A549 (cell line): ENCODE measurements at regions of chr16 and their contacts with region 1.

Region 1: GRCh38 chr16:75110637-75111513 is 5.7 kb downstream of the LDHD start:
- DNase-seq: peak; percentile 87 to 90
- ATAC-seq: peak; percentile 76 to 89
- H3K4me3 ChIP-seq: peak overlapping the region; percentile 22; the same call in 2 of the 3 replicates
- H3K27ac ChIP-seq: peak overlapping the region; percentile 49 to 90
- H3K4me1 ChIP-seq: peaks cover 40% of the 10 kb centered on the region
- CTCF ChIP-seq: peak; percentile 84
- EP300 ChIP-seq: no peak
- POLR2A ChIP-seq: no peak
- RAD21 ChIP-seq: peak; percentile 94 to 95

Region 2: GRCh38 chr16:74998481-74999218 is 112.2 kb before region 1 on chr16 and contains the start of gene ZNRF1:
- CTCF ChIA-PET with region 1: interaction called, 252 read pairs
- POLR2A ChIA-PET with region 1: interaction called, 14 read pairs
- DNase-seq: peak; percentile 82 to 86
- ATAC-seq: peak; percentile 84 to 88
- H3K4me3 ChIP-seq: peak within 1 kb of the TSS; percentile 80
- H3K27ac ChIP-seq: peak within 1 kb of the TSS; percentile 92 to 98
- H3K4me1 ChIP-seq: peaks cover 21% of the 10 kb centered on the region
- CTCF ChIP-seq: peak; percentile 95
- EP300 ChIP-seq: no peak; a peak in 1 of 5 replicates
- POLR2A ChIP-seq: peak; percentile 87
- RAD21 ChIP-seq: peak; percentile 88 to 95
- polyA plus RNA-seq, gene ZNRF1: 21.4 and 22.6 TPM in 2 replicates

Region 3: GRCh38 chr16:75019007-75019406 is 91.9 kb before region 1 on chr16:
- CTCF ChIA-PET with region 1: interaction called, 51 read pairs
- POLR2A ChIA-PET with region 1: no interaction called
- DNase-seq: peak in 1 of 2 experiments; percentile 54
- ATAC-seq: peak; percentile 47 to 59; a peak in 3 of 6 replicates
- H3K4me3 ChIP-seq: no peak overlapping the region
- H3K27ac ChIP-seq: peak overlapping the region; percentile 67 to 80
- H3K4me1 ChIP-seq: peaks cover 32% of the 10 kb centered on the region
- CTCF ChIP-seq: no peak
- EP300 ChIP-seq: peak in 1 of 2 experiments; percentile 14; a peak in 1 of 5 replicates
- POLR2A ChIP-seq: no peak
- RAD21 ChIP-seq: no peak

Region 4: DNA sequence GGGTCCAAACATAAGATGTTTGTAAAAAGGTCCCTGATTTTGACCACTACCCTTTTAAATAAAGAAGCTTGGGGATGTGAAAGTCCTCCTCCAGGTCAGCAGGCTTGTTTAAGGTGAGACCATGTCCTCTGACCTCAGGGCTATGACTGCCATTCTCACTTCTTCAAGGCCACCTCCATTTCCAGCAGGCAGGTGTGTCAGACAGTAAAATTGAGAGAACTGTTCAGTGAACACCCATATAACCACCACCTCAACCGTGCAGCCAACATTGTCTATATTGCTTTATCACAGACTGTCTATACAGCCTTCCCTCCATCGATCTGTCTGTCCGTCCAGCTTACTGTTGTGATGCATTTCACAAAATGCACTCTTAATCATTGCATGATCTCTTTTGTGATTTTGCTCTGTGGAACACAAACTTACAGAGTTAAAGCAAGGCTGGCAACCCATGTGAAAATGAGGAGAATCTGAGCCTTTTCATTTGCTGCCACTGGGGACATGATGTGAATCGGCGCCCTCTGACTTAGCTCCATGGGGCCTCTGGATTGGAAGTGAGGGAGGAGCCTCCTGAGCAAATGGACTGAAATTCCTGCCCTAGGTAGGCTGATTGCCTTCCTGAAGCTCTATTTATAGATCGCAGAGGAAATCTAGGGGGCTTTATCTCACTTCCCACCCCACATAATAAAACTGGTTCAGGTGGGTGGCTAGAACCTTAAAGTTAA is 58.2 kb before region 1 on chr16:
- CTCF ChIA-PET with region 1: interaction called, 13 read pairs
- POLR2A ChIA-PET with region 1: no interaction called
- DNase-seq: peak in 1 of 2 experiments; percentile 16
- ATAC-seq: peak in 1 of 2 experiments; percentile 54; a peak in 4 of 6 replicates
- H3K4me3 ChIP-seq: no peak overlapping the region
- H3K27ac ChIP-seq: no peak overlapping the region; a peak in 1 of 6 replicates
- H3K4me1 ChIP-seq: peaks cover 28% of the 10 kb centered on the region
- CTCF ChIP-seq: no peak
- EP300 ChIP-seq: no peak
- POLR2A ChIP-seq: no peak
- RAD21 ChIP-seq: no peak

Region 5: DNA sequence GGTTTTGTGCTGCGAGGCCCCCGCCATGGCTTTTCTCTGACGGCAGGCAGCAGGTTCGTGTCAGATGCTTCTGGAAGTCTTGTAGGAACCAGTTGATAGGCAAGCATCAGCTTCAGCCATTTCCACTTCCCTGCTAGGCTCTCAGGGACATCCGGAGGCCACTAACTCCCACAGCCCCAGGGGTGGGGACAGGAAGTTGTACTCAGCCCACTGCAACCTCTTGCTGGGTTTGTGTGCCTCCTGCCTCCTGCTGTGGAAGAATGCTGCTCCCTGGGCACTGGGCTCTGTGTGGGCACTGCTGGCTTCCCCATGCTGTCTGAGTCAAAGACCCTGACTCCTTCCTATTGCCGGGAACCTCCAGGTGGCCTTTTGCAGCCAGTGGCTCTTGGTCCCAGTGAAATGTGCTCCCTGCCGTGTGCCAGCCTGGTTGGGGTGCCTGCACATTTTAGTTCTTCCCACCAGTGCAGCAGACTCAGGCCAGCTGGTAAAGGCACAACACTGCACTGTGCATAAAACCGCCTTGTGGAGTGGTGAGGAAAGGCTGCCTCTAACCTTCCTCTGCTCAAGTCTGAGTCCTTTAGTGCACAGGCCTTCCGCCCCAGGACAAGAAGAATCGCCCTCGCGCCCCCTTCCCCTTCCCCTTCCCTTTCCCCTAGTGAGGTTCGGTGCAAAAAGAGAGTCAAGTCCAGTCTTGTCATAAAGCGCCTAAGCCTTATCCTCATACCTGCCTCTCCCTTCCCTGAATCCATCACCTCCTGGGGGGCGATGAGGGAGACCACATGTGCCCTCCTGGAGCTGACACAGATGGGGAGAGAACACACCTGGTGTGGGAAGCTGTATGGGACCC is 10.9 kb before region 1 on chr16:
- CTCF ChIA-PET with region 1: interaction called, 69 read pairs
- POLR2A ChIA-PET with region 1: no interaction called
- DNase-seq: no peak
- ATAC-seq: peak; percentile 32 to 37; a peak in 2 of 6 replicates
- H3K4me3 ChIP-seq: no peak overlapping the region
- H3K27ac ChIP-seq: 0 out of 6 replicates have a peak overlapping the region, but pooled peaks of 1 of the 2 experiments have one; percentile 0
- H3K4me1 ChIP-seq: no peaks in the 10 kb centered on the region
- CTCF ChIP-seq: no peak
- EP300 ChIP-seq: no peak
- POLR2A ChIP-seq: no peak
- RAD21 ChIP-seq: no peak

Region 6: GRCh38 chr16:75130150-75130771 is 19.4 kb after region 1 on chr16:
- CTCF ChIA-PET with region 1: interaction called, 18 read pairs
- POLR2A ChIA-PET with region 1: no interaction called
- DNase-seq: no peak
- ATAC-seq: peak; percentile 72 to 73; a peak in 4 of 6 replicates
- H3K4me3 ChIP-seq: no peak overlapping the region
- H3K27ac ChIP-seq: no peak overlapping the region
- H3K4me1 ChIP-seq: no peaks in the 10 kb centered on the region
- CTCF ChIP-seq: peak; percentile 22; the same call in 1 of the 3 replicates
- EP300 ChIP-seq: no peak
- POLR2A ChIP-seq: no peak
- RAD21 ChIP-seq: peak; percentile 40 to 61; a peak in 4 of 5 replicates